Activated B cell treated with CpG ODN at 0.5 μM for 24 hours (primary cell): ENCODE measurements at regions of chr2 and their contacts with region 1.

Region 1: GRCh38 chr2:55133467-55134315 is 83.4 kb upstream of the RTN4 start:
- DNase-seq: no peak
- ATAC-seq: peak; percentile 76
- H3K4me3 Mint-ChIP-seq: peak overlapping the region; percentile 88
- H3K27ac Mint-ChIP-seq: peak overlapping the region; percentile 91
- H3K4me1 Mint-ChIP-seq: peaks cover 34% of the 10 kb centered on the region
- H3K27me3 Mint-ChIP-seq: no peaks in the 10 kb centered on the region
- CTCF ChIP-seq: no peak

Region 2: DNA sequence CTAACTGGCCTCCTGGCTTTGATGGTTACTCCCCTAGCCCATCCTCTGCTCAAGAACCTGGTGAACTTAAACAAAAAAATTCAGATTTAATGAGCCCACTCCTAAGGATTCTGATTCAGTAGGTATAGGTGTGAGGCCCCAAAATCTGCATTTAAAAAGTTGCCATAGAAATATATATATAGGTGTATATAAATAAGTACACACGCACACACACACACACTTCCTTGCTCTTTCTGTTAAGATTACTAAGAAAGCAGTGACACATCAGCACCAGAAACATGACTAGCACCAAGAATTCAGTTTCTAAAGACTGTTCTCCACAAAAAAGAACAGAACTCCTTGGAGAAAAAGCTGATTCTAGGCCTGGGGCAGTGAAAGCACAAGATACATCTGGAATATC is 392.4 kb before region 1 on chr2:
- CTCF ChIA-PET with region 1: no interaction called
- POLR2A ChIA-PET with region 1: no interaction called
- intact Hi-C with region 1: no loop called
- DNase-seq: no peak
- ATAC-seq: no peak
- H3K4me3 Mint-ChIP-seq: no peak overlapping the region
- H3K27ac Mint-ChIP-seq: no peak overlapping the region
- H3K4me1 Mint-ChIP-seq: peaks cover 7% of the 10 kb centered on the region
- H3K27me3 Mint-ChIP-seq: no peaks in the 10 kb centered on the region
- CTCF ChIP-seq: no peak

Region 3: GRCh38 chr2:55150834-55151233 is 17.1 kb after region 1 on chr2:
- CTCF ChIA-PET with region 1: no interaction called
- POLR2A ChIA-PET with region 1: interaction called, 7 read pairs
- intact Hi-C with region 1: loop called (anchors 1 kb)
- DNase-seq: no peak
- ATAC-seq: peak; percentile 89
- H3K4me3 Mint-ChIP-seq: no peak overlapping the region
- H3K27ac Mint-ChIP-seq: peak overlapping the region; percentile 84
- H3K4me1 Mint-ChIP-seq: peaks cover 54% of the 10 kb centered on the region
- H3K27me3 Mint-ChIP-seq: no peaks in the 10 kb centered on the region
- CTCF ChIP-seq: no peak

Region 4: GRCh38 chr2:55223958-55224760 is 90.5 kb after region 1 on chr2:
- CTCF ChIA-PET with region 1: no interaction called
- POLR2A ChIA-PET with region 1: no interaction called
- intact Hi-C with region 1: loop called (anchors 1 kb)
- DNase-seq: no peak
- ATAC-seq: no peak
- H3K4me3 Mint-ChIP-seq: peak overlapping the region; percentile 81
- H3K27ac Mint-ChIP-seq: peak overlapping the region; percentile 87
- H3K4me1 Mint-ChIP-seq: peaks cover 28% of the 10 kb centered on the region
- H3K27me3 Mint-ChIP-seq: no peaks in the 10 kb centered on the region
- CTCF ChIP-seq: no peak

Region 5: GRCh38 chr2:55693181-55694134 is 559.8 kb after region 1 on chr2 and contains the start of gene PNPT1:
- CTCF ChIA-PET with region 1: no interaction called
- POLR2A ChIA-PET with region 1: no interaction called
- intact Hi-C with region 1: loop called (anchors 10 kb)
- DNase-seq: peak; percentile 87
- ATAC-seq: peak; percentile 100
- H3K4me3 Mint-ChIP-seq: peak within 1 kb of the TSS; percentile 96
- H3K27ac Mint-ChIP-seq: peak within 1 kb of the TSS; percentile 79
- H3K4me1 Mint-ChIP-seq: peaks cover 30% of the 10 kb centered on the region
- H3K27me3 Mint-ChIP-seq: no peaks in the 10 kb centered on the region
- CTCF ChIP-seq: no peak
- total RNA-seq, gene PNPT1: 26.6 and 35.8 TPM in 2 replicates